CD4-positive, alpha-beta memory T cell (primary cell): ENCODE measurements at regions of chr1 and their contacts with region 1.

Region 1: GRCh38 chr1:7902478-7903085 is 38.1 kb downstream of the TNFRSF9 start:
- DNase-seq: peak; percentile 51 to 58 (median 55)
- H3K4me3 ChIP-seq: no peak overlapping the region
- H3K4me3 Mint-ChIP-seq: peak overlapping the region; percentile 57 to 76 (median 70)
- H3K27ac ChIP-seq: no peak overlapping the region
- H3K27ac Mint-ChIP-seq: no peak overlapping the region
- H3K4me1 ChIP-seq: no peaks in the 10 kb centered on the region
- H3K4me1 Mint-ChIP-seq: peaks cover 0 to 13% (median 2%) of the 10 kb centered on the region in 4 donors
- H3K27me3 ChIP-seq: no peaks in the 10 kb centered on the region
- H3K27me3 Mint-ChIP-seq: no peaks in the 10 kb centered on the region

Region 2: DNA sequence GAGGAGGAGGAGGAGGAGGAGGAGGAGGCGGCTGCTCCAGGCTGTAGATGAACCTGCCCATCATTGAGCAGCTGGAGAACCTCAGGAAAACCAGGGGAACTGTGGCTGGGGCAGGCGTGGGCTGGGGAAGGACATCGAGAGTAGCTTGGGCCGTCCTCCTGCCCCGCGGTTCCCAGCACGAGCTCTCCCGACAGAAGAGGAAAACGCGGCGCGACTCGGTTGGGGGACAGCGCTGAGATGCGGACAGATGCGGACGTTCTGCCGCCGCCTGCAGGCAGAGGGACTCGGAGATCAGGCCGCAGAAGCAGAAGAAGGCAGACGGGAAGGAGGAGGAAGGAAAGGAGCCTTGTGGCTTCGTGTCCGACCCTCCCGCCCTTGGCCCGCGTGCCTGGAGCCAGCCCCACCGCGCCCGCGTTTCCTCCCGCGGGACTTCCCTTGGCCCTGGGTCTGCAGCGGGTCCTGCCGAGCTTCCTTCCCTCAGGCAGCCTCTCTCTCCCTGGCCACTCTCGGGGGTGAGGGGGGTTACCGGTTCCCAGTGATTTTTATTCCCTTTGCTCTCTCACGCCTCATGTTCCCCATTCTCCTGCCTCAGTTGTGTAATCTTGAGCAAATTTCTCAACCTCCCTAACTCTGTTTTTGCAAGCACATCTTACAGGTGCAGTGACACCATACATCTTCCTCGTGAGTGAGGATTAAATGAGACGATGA is 39.8 kb after region 1 on chr1:
- CTCF ChIA-PET with region 1: interaction called, 11 read pairs
- POLR2A ChIA-PET with region 1: no interaction called
- intact Hi-C with region 1: loop called (anchors 5 kb)
- DNase-seq: peak in 3 of 5 donors; percentile 22 to 36 (median 24)
- H3K4me3 ChIP-seq: peak overlapping the region in 1 of 2 donors; percentile 4
- H3K4me3 Mint-ChIP-seq: peak overlapping the region; percentile 71 to 86 (median 80)
- H3K27ac ChIP-seq: no peak overlapping the region
- H3K27ac Mint-ChIP-seq: peak overlapping the region in 4 of 7 donors; percentile 29 to 81 (median 64)
- H3K4me1 ChIP-seq: peaks cover 26% of the 10 kb centered on the region
- H3K4me1 Mint-ChIP-seq: peaks cover 20 to 37% (median 26%) of the 10 kb centered on the region in 4 donors
- H3K27me3 ChIP-seq: peaks cover 6% of the 10 kb centered on the region
- H3K27me3 Mint-ChIP-seq: peaks cover 15 to 17% of the 10 kb centered on the region in 2 donors

Region 3: DNA sequence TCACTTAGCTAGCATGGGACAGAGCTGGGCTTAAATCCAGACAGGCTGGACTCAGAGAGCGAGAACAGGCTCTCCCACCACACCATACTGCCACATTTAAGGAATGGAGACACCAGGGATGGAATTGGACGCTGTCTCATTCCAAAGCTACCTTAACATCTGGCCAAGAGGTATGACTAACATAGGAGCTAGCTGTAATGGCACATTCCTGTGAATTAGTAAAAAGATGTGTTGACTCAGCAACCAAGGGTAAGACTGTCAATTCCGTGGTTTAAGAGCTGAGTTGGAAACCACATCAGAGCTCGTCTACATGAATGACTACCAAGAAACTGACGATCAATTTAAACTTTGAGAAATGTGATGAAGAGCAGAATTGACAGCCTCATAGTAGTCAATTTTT is 46.4 kb after region 1 on chr1:
- CTCF ChIA-PET with region 1: interaction called, 11 read pairs
- POLR2A ChIA-PET with region 1: interaction called, 5 read pairs
- intact Hi-C with region 1: loop called (anchors 5 kb)
- DNase-seq: peak; percentile 62 to 79 (median 69)
- H3K4me3 ChIP-seq: no peak overlapping the region
- H3K4me3 Mint-ChIP-seq: peak overlapping the region in 7 of 8 donors; percentile 3 to 47 (median 29)
- H3K27ac ChIP-seq: no peak overlapping the region
- H3K27ac Mint-ChIP-seq: peak overlapping the region in 6 of 7 donors; percentile 25 to 73 (median 50)
- H3K4me1 ChIP-seq: peaks cover 22% of the 10 kb centered on the region
- H3K4me1 Mint-ChIP-seq: peaks cover 20 to 38% (median 24%) of the 10 kb centered on the region in 4 donors
- H3K27me3 ChIP-seq: no peaks in the 10 kb centered on the region
- H3K27me3 Mint-ChIP-seq: no peaks in the 10 kb centered on the region

Region 4: GRCh38 chr1:8026153-8026975 is 123.8 kb after region 1 on chr1 and contains the start of gene ERRFI1:
- CTCF ChIA-PET with region 1: no interaction called
- POLR2A ChIA-PET with region 1: no interaction called
- intact Hi-C with region 1: no loop called
- DNase-seq: peak; percentile 80 to 88 (median 81)
- H3K4me3 ChIP-seq: peak within 1 kb of the TSS in 1 of 2 donors; percentile 33
- H3K4me3 Mint-ChIP-seq: peak within 1 kb of the TSS; percentile 81 to 91 (median 86)
- H3K27ac ChIP-seq: no peak within 1 kb of the TSS
- H3K27ac Mint-ChIP-seq: peak within 1 kb of the TSS; percentile 8 to 89 (median 86)
- H3K4me1 ChIP-seq: peaks cover 14% of the 10 kb centered on the region
- H3K4me1 Mint-ChIP-seq: peaks cover 8 to 13% (median 10%) of the 10 kb centered on the region in 4 donors
- H3K27me3 ChIP-seq: peaks cover 6% of the 10 kb centered on the region
- H3K27me3 Mint-ChIP-seq: peaks cover 7 to 13% of the 10 kb centered on the region in 2 donors
- total RNA-seq, gene ERRFI1: 1.0 TPM